Posterior cingulate gyrus (tissue), 11 donors: ENCODE measurements at regions of chr14 and their contacts with region 1.

Region 1: DNA sequence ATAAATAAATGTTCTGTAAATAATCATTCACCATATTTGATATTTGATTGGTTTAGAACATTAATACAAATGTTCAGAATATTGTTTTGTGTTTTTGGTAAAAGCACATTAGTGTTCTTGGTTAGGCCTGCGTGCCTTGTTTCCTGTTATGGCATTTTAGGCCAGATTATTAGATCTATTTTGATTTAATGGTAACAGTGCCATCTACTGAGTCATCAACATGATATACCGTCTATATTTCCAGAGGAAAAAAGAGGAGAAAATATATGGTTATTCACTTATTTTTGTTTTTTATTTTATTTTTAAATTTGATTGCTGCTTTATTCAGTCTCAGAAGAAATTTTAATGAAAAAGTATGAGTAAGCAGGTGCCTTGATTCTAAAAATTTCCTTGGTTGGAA is 60.3 kb downstream of the GPHN start:
- DNase-seq: no peak

Region 2: GRCh38 chr14:66495218-66496098 is 72.8 kb before region 1 on chr14:
- intact Hi-C with region 1: loop called (anchors 5 kb)
- DNase-seq: peak in 6 of 10 donors; percentile 12 to 81 (median 32)

Region 3: DNA sequence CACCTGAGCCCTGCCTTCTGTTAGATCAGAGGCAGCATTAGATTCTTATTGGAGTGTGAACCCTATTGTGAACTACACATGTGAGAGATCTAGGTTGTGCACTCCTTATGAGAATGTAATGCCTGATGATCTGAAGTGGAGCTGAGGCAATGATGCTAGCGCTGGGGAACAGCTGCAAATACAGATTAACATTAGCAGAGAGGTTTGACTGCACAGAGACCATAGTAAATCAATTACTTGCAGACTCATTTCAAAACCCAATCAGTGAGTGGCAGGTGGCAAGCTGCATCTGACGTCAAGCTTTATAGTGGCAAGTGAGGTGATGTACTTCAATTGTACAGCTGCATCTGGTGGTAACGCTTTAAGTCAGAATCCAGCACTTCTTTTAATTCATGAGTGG is 81.3 kb after region 1 on chr14:
- intact Hi-C with region 1: no loop called
- DNase-seq: no peak